Endothelial cell of umbilical vein (primary cell): ENCODE measurements at regions of chr9 and their contacts with region 1.

Region 1: GRCh38 chr9:127224178-127224882 is 40.2 kb upstream of the GARNL3 start:
- DNase-seq: peak; percentile 86
- H3K4me3 ChIP-seq: peak overlapping the region in 2 of 3 experiments; percentile 31 to 44
- H3K27ac ChIP-seq: no peak overlapping the region
- H3K4me1 ChIP-seq: peaks cover 6% of the 10 kb centered on the region
- H3K27me3 ChIP-seq: peaks cover 14 to 27% of the 10 kb centered on the region in 2 experiments
- CTCF ChIP-seq: no peak
- POLR2A ChIP-seq: no peak

Region 2: DNA sequence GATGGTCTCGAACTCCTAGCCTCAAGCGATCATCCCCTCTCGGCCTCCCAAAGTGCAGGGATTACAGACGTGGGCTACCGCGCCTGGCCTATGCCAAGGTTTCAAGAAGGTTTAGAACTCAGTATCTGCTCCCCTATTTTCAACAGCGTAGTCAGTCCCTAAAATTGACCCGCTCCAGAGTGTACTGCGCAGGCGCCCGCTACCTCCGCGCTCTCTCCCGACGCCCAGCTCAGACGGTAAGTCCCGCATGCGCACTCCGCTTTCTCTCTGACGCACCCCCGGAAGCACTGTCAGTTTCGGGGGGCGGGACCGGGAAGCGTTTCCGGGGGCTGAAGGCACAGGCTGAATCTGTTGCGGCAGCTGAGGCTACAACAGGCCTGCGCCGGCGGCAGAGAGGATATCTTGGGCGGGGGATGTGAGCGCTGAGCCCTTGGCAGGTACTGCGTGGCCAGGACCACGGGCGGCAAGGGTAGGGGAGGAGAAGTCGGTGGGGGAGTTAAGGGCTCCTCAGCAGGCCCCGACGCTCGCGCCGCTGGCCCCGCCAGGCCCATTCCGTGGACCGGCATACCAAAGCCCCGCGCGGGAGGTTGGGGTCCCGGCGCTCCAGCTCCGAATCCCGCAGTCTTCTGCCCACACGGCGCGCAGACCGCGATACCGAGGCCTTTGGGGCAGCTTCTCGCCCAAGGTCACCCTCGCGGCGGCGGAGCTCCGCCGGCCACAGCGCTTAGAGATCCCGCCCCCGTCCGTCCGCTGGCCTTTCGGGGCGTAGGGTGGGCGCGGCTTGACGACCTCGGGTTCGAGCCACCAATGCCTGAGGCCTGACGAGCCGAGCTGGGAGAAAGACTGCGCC is 419.4 kb before region 1 on chr9 and contains the start of gene ZBTB43:
- CTCF ChIA-PET with region 1: no interaction called
- POLR2A ChIA-PET with region 1: no interaction called
- dilution Hi-C with region 1: no loop called
- intact Hi-C with region 1: no loop called
- DNase-seq: peak; percentile 97
- H3K4me3 ChIP-seq: peak within 1 kb of the TSS; percentile 8 to 94 (median 70)
- H3K27ac ChIP-seq: peak within 1 kb of the TSS; percentile 46
- H3K4me1 ChIP-seq: peaks cover 10% of the 10 kb centered on the region
- H3K27me3 ChIP-seq: peaks cover 0 to 2% of the 10 kb centered on the region in 2 experiments
- CTCF ChIP-seq: no peak
- POLR2A ChIP-seq: peak; percentile 73
- total RNA-seq, gene ZBTB43: 9.0 and 14.2 TPM in 2 replicates

Region 3: DNA sequence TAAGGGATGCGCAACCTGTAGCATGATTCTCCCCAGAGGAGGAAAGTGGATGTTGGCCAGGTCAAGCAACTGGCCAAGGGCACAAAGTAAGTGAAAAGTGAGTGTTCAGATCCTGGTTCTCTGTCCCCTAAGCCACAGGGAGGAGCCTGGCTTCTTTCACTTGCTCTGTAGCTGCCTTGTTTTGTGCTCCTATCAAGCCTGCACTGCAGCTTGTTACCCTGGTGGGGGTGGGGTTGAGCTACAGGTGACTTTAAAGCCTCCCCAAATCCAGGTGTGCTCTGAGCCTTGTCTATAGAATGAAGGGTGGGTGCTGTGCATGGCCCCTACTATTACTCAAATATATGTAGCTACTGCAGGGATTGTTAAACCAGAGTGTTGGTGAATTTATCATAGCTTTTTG is 276.8 kb before region 1 on chr9:
- CTCF ChIA-PET with region 1: no interaction called
- POLR2A ChIA-PET with region 1: no interaction called
- dilution Hi-C with region 1: no loop called
- intact Hi-C with region 1: no loop called
- DNase-seq: no peak
- H3K4me3 ChIP-seq: no peak overlapping the region
- H3K27ac ChIP-seq: no peak overlapping the region
- H3K4me1 ChIP-seq: no peaks in the 10 kb centered on the region
- H3K27me3 ChIP-seq: peaks cover 0 to 2% of the 10 kb centered on the region in 2 experiments
- CTCF ChIP-seq: no peak
- POLR2A ChIP-seq: no peak

Region 4: DNA sequence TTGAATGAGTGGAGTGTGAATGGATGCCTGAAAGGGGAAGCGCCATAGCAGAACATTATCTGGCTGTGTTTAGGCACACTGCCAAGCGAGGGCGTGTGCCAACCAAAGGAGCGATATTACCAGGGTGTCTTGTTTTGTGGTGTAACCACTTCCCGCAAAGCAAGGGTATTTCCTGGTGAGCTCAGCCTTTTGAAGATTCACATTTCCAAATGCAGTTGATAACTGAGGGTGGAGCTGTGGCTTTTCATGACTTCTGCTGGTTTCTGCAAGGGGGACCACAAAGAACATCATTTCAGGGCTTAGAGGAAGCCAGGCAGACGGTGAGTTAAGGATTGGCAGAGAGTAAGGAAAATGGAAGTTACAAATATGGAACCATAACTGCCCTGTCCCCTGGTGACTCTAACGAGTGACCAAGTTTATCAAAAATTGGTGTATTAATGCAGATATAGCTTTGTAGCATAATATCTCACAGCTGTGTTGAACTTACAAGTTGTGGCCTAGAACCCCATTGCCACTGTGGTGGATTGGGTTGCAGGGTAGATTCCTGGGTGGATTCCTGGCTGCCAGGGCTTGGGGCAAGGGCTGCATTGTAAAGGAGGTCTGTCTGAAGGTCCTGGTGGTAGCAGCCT is 238.3 kb before region 1 on chr9:
- CTCF ChIA-PET with region 1: no interaction called
- POLR2A ChIA-PET with region 1: no interaction called
- dilution Hi-C with region 1: no loop called
- intact Hi-C with region 1: no loop called
- DNase-seq: peak; percentile 46
- H3K4me3 ChIP-seq: no peak overlapping the region
- H3K27ac ChIP-seq: no peak overlapping the region
- H3K4me1 ChIP-seq: peaks cover 7% of the 10 kb centered on the region
- H3K27me3 ChIP-seq: no peaks in the 10 kb centered on the region
- CTCF ChIP-seq: no peak
- POLR2A ChIP-seq: no peak

Region 5: DNA sequence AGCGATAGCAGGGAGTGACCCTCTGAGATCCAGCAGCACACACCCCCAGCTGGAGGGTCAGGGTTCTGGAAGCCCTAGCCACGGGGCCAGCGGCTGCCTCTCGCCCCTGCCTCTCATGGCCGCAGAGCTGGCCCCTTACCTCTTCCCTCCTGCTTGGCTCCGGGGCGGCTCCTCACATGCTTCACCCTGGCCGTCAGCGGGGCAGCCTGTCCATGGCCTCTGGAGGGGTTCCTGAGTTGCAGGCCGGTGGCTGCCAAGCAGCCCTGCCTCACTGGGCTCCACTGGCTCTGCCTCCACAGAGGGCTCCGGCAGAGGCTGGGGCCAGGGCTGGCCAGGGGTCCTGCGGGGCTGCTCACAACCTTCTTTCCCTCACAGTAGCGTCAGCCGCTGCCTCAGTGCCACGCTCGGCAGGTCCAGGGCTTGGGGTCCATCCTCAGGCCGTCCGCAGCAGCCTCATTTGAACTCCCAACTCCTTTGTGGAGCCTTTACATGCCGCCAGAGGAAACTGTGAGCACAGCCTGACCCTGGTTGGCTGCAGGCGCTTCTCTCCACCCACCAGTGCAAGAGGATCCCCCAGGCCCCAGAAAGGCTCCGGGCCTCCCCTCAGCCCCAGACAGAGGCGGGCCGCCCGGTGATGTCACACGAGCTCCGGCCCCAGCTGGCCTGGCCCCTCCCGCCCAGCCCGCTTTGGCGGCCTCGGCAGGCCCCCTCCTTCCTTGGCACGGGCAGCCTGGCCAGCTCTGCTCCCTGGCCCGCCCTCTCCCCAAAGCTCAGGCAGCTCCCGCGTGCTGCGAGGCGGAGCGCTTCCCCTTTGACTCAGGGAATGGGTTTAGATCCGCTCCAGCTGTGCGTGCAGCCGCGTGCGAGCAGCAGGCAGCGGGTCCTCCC is 101.9 kb before region 1 on chr9 and contains the start of gene ANGPTL2:
- CTCF ChIA-PET with region 1: no interaction called
- POLR2A ChIA-PET with region 1: no interaction called
- dilution Hi-C with region 1: no loop called
- intact Hi-C with region 1: loop called (anchors 1 kb)
- DNase-seq: peak; percentile 94
- H3K4me3 ChIP-seq: peak within 1 kb of the TSS; percentile 30 to 64 (median 53)
- H3K27ac ChIP-seq: peak within 1 kb of the TSS; percentile 70
- H3K4me1 ChIP-seq: peaks cover 16% of the 10 kb centered on the region
- H3K27me3 ChIP-seq: peaks cover 1 to 2% of the 10 kb centered on the region in 2 experiments
- CTCF ChIP-seq: peak in 1 of 2 donors; percentile 5
- POLR2A ChIP-seq: peak; percentile 70
- total RNA-seq, gene ANGPTL2: 21.8 and 24.5 TPM in 2 replicates

Region 6: DNA sequence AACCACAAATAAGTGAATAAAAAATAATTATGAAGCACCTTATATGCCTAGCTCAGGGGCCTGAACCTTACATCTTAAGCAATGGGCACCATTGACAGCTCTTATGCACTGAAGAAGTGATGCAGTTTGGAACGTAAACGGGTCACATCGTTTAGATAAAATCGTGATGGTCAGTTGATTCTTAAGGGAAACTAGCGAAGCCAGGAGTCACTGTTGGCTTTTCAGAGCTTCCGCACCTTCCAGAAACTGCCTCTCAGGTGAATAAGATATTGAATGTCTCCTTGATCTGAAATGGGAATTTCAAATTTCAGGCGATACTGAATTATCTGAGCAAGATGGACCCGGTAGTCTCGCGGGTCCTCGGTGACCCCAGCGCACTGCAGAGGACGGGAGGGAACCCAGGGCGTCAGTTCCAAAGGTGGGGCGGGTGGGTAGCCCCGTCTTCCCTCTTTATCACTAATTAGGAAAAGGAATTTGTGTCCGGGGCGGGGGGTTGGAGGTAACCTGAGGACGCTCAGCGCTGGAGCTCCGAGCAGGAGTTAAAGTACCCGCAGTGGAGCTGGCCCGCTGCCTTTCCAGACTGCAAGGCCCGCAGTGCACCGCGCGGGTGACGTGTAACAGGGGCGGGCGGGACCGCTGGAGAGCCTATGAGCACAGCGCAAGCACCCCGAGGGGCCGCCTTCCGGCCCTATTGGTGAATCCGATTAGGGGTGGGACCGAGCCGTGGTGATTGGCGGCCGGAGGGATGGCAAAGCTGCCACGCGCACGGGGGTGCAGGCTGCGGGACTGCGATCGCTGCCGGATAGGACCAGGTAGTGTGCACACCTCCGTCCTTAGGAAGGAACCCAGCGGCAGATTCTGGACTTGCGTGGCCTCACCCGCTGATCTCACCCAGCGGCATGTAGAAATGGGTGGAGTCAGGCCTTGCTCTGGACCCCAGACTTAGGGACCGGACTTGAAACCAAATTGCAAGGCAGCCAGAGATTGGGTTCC is 20.6 kb after region 1 on chr9:
- CTCF ChIA-PET with region 1: interaction called, 5 read pairs
- POLR2A ChIA-PET with region 1: interaction called, 15 read pairs
- dilution Hi-C with region 1: no loop called
- intact Hi-C with region 1: loop called (anchors 1 kb)
- DNase-seq: peak; percentile 94
- H3K4me3 ChIP-seq: peak overlapping the region; percentile 0 to 63 (median 61)
- H3K27ac ChIP-seq: peak overlapping the region; percentile 56
- H3K4me1 ChIP-seq: peaks cover 7% of the 10 kb centered on the region
- H3K27me3 ChIP-seq: no peaks in the 10 kb centered on the region
- CTCF ChIP-seq: no peak
- POLR2A ChIP-seq: peak; percentile 79

Region 7: GRCh38 chr9:127396808-127397497 is 172.6 kb after region 1 on chr9 and contains the start of gene SLC2A8:
- CTCF ChIA-PET with region 1: interaction called, 17 read pairs
- POLR2A ChIA-PET with region 1: interaction called, 3 read pairs
- dilution Hi-C with region 1: no loop called
- intact Hi-C with region 1: no loop called
- DNase-seq: peak; percentile 100
- H3K4me3 ChIP-seq: peak within 1 kb of the TSS; percentile 42 to 85 (median 60)
- H3K27ac ChIP-seq: peak within 1 kb of the TSS; percentile 5
- H3K4me1 ChIP-seq: peaks cover 9% of the 10 kb centered on the region
- H3K27me3 ChIP-seq: peaks cover 2 to 4% of the 10 kb centered on the region in 2 experiments
- CTCF ChIP-seq: no peak
- POLR2A ChIP-seq: peak; percentile 62
- total RNA-seq, gene SLC2A8: 17.0 and 19.3 TPM in 2 replicates

Region 8: GRCh38 chr9:127423934-127424675 is 199.8 kb after region 1 on chr9 and contains the start of gene ZNF79:
- CTCF ChIA-PET with region 1: interaction called, 6 read pairs
- POLR2A ChIA-PET with region 1: interaction called, 5 read pairs
- dilution Hi-C with region 1: no loop called
- intact Hi-C with region 1: loop called (anchors 1 kb)
- DNase-seq: peak; percentile 97
- H3K4me3 ChIP-seq: peak within 1 kb of the TSS; percentile 54 to 90 (median 62)
- H3K27ac ChIP-seq: peak within 1 kb of the TSS; percentile 79
- H3K4me1 ChIP-seq: peaks cover 25% of the 10 kb centered on the region
- H3K27me3 ChIP-seq: no peaks in the 10 kb centered on the region
- CTCF ChIP-seq: no peak
- POLR2A ChIP-seq: peak; percentile 86
- total RNA-seq, gene ZNF79: 8.9 and 10.6 TPM in 2 replicates

Region 9: GRCh38 chr9:127715394-127716337 is 491.3 kb after region 1 on chr9 and contains the starts of genes PTRH1 and TTC16:
- CTCF ChIA-PET with region 1: no interaction called
- POLR2A ChIA-PET with region 1: no interaction called
- dilution Hi-C with region 1: no loop called
- intact Hi-C with region 1: loop called (anchors 5 kb)
- DNase-seq: peak; percentile 95
- H3K4me3 ChIP-seq: peak within 1 kb of the TSS; percentile 67 to 88 (median 85)
- H3K27ac ChIP-seq: peak within 1 kb of the TSS; percentile 36
- H3K4me1 ChIP-seq: peaks cover 5% of the 10 kb centered on the region
- H3K27me3 ChIP-seq: no peaks in the 10 kb centered on the region
- CTCF ChIP-seq: no peak
- POLR2A ChIP-seq: no peak
- total RNA-seq, gene PTRH1: 19.6 and 25.1 TPM in 2 replicates
- total RNA-seq, gene TTC16: not detected in 2 replicates